ENCODE measurements at regions of chr1 and their contacts with region 1.

Region 1: DNA sequence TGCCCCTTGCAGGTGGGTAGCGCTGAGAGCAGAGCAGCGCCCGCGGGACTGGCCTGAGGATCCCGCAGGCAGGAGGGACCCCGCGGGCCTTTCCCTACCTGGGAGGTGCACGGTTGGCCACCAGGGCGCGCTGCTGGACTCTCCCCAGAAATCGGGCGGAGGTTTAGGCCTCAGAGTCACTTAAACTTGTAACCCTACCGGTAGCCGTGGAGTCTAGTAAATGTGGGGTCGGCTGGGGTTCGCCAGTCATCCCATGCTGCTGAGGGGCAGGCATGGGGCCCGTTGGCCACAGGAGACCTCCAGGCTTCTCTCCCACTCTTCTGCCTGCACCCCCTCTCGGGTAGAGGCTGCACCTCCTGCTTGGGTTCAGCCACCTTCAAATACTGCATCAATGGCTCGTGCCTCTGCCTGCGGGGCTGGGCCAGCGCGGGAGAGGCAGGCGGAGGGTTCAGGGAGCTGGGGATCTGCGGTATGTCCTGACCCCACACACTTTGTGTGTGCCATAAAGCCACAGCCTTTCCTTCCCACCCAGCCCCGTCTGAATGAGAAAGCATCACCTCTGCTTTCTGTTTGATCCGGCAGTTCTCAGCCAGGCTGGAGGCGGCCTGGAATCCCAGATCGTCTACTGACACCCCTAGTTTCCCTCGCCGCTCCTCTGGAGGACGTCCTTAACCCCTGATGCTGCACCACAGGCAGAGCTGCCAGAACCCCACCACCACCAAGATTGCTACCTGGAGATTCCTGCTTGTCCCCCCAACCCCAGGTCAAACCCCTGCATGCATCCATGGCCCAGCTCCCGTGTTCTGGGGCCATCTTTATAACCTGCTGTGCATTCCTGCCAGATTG is 12.3 kb upstream of the GSTM4 start:
- DNase-seq: peak; percentile 93
- ATAC-seq: peak; percentile 97
- H3K4me3 Mint-ChIP-seq: no peak overlapping the region
- H3K27ac Mint-ChIP-seq: no peak overlapping the region
- H3K4me1 Mint-ChIP-seq: peaks cover 11% of the 10 kb centered on the region
- H3K27me3 Mint-ChIP-seq: peaks cover 2% of the 10 kb centered on the region

Region 2: DNA sequence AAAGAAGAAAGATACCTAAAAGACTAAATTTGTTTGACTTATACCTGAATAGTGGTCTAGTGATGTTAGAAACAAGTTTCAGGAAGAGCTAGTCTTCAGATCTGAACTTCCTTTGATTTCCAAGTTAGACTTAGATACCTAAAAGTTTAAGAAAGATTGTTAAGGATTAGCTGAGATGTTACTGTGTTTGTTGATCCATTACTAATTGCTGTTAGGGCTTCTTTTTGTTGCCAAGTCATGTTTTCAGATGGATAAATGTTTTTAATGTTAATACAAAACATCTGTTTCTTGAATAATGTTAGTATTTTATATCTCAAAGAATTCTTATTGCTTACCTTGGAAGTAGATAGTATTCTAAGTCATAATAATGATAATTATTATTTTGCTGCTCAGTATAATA is 83.6 kb before region 1 on chr1:
- CTCF ChIA-PET with region 1: interaction called, 16 read pairs
- DNase-seq: no peak
- ATAC-seq: no peak
- H3K4me3 Mint-ChIP-seq: no peak overlapping the region
- H3K27ac Mint-ChIP-seq: no peak overlapping the region
- H3K4me1 Mint-ChIP-seq: peaks cover 26% of the 10 kb centered on the region
- H3K27me3 Mint-ChIP-seq: no peaks in the 10 kb centered on the region

Region 3: GRCh38 chr1:109620841-109621286 is 22.7 kb before region 1 on chr1:
- CTCF ChIA-PET with region 1: interaction called, 112 read pairs
- DNase-seq: peak; percentile 99
- ATAC-seq: peak; percentile 88
- H3K4me3 Mint-ChIP-seq: peak overlapping the region; percentile 99
- H3K27ac Mint-ChIP-seq: peak overlapping the region; percentile 98
- H3K4me1 Mint-ChIP-seq: peaks cover 63% of the 10 kb centered on the region
- H3K27me3 Mint-ChIP-seq: no peaks in the 10 kb centered on the region

Region 4: GRCh38 chr1:109655601-109656519 is 12.3 kb after region 1 on chr1 and contains the start of gene GSTM4:
- CTCF ChIA-PET with region 1: interaction called, 98 read pairs
- DNase-seq: peak; percentile 73
- ATAC-seq: peak; percentile 93
- H3K4me3 Mint-ChIP-seq: peak within 1 kb of the TSS; percentile 79
- H3K27ac Mint-ChIP-seq: peak within 1 kb of the TSS; percentile 48
- H3K4me1 Mint-ChIP-seq: peaks cover 10% of the 10 kb centered on the region
- H3K27me3 Mint-ChIP-seq: peaks cover 35% of the 10 kb centered on the region
- total RNA-seq, gene GSTM4: 5.7 to 6.7 TPM

Region 5: GRCh38 chr1:109790735-109791494 is 147.3 kb after region 1 on chr1:
- CTCF ChIA-PET with region 1: interaction called, 10 read pairs
- DNase-seq: peak; percentile 96
- ATAC-seq: peak; percentile 95
- H3K4me3 Mint-ChIP-seq: peak overlapping the region; percentile 42
- H3K27ac Mint-ChIP-seq: peak overlapping the region; percentile 96
- H3K4me1 Mint-ChIP-seq: peaks cover 94% of the 10 kb centered on the region
- H3K27me3 Mint-ChIP-seq: no peaks in the 10 kb centered on the region